ENCODE measurements at regions of chr3 and their contacts with region 1.

Region 1: GRCh38 chr3:52339612-52340011 is 23.5 kb downstream of the DNAH1 start:
- DNase-seq: peak; percentile 64 to 82 (median 79)
- H3K4me3 ChIP-seq: no peak overlapping the region
- H3K4me3 Mint-ChIP-seq: no peak overlapping the region
- H3K27ac ChIP-seq: no peak overlapping the region
- H3K27ac Mint-ChIP-seq: peak overlapping the region in 6 of 7 donors; percentile 12 to 88 (median 52)
- H3K4me1 ChIP-seq: no peaks in the 10 kb centered on the region
- H3K4me1 Mint-ChIP-seq: peaks cover 7 to 10% (median 8%) of the 10 kb centered on the region in 4 donors
- H3K27me3 ChIP-seq: no peaks in the 10 kb centered on the region
- H3K27me3 Mint-ChIP-seq: no peaks in the 10 kb centered on the region

Region 2: GRCh38 chr3:52144034-52144795 is 195.4 kb before region 1 on chr3:
- CTCF ChIA-PET with region 1: interaction called, 4 read pairs
- POLR2A ChIA-PET with region 1: no interaction called
- intact Hi-C with region 1: loop called (anchors 1 kb)
- DNase-seq: peak; percentile 80 to 91 (median 82)
- H3K4me3 ChIP-seq: no peak overlapping the region
- H3K4me3 Mint-ChIP-seq: no peak overlapping the region
- H3K27ac ChIP-seq: no peak overlapping the region
- H3K27ac Mint-ChIP-seq: peak overlapping the region in 6 of 7 donors; percentile 32 to 82 (median 60)
- H3K4me1 ChIP-seq: peaks cover 6% of the 10 kb centered on the region
- H3K4me1 Mint-ChIP-seq: peaks cover 6 to 11% (median 9%) of the 10 kb centered on the region in 4 donors
- H3K27me3 ChIP-seq: no peaks in the 10 kb centered on the region
- H3K27me3 Mint-ChIP-seq: no peaks in the 10 kb centered on the region

Region 3: DNA sequence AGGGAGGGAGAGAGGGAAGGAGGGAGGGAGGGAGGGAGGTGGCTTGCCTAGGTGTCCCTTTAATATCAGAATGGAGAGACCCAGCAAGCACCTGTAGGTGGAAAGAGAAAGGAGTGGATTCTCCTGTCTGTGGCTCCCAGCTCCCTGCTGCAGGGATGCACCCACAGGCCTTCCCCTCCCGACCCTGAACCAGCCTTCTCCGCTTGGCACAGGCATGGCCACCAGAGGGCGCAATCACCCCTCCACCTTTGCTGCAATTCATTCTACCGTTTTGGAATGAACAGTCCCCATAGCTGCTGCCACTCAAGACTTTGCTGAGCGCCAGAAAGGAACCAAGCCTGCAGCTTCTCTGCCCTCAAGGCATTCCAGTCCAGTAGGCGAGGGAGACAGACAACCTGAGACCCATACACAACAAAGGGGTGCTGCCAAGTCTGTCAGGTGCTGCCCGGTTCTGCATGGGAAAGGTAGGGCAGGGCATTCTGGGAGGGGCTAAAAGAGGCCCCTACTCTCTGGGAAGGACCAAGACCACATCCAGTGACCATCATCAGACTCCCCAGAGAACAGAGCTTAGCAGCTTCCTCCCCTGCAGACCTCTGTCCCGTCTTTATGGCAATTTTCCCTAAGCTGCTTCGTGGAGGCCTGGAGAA is 119.1 kb before region 1 on chr3:
- CTCF ChIA-PET with region 1: interaction called, 247 read pairs
- POLR2A ChIA-PET with region 1: interaction called, 10 read pairs
- intact Hi-C with region 1: loop called (anchors 1 kb)
- DNase-seq: peak; percentile 81 to 86 (median 83)
- H3K4me3 ChIP-seq: no peak overlapping the region
- H3K4me3 Mint-ChIP-seq: peak overlapping the region in 7 of 8 donors; percentile 52 to 85 (median 67)
- H3K27ac ChIP-seq: peak overlapping the region; percentile 44
- H3K27ac Mint-ChIP-seq: peak overlapping the region; percentile 61 to 93 (median 84)
- H3K4me1 ChIP-seq: peaks cover 98% of the 10 kb centered on the region
- H3K4me1 Mint-ChIP-seq: peaks cover 50 to 99% (median 80%) of the 10 kb centered on the region in 4 donors
- H3K27me3 ChIP-seq: no peaks in the 10 kb centered on the region
- H3K27me3 Mint-ChIP-seq: no peaks in the 10 kb centered on the region

Region 4: GRCh38 chr3:52245322-52246263 is 94.0 kb before region 1 on chr3 and contains the start of gene PPM1M:
- CTCF ChIA-PET with region 1: interaction called, 26 read pairs
- POLR2A ChIA-PET with region 1: interaction called, 3 read pairs
- intact Hi-C with region 1: no loop called
- DNase-seq: peak; percentile 71 to 84 (median 79)
- H3K4me3 ChIP-seq: peak within 1 kb of the TSS; percentile 88 to 95
- H3K4me3 Mint-ChIP-seq: peak within 1 kb of the TSS; percentile 82 to 94 (median 90)
- H3K27ac ChIP-seq: peak within 1 kb of the TSS; percentile 90
- H3K27ac Mint-ChIP-seq: peak within 1 kb of the TSS; percentile 95 to 97 (median 96)
- H3K4me1 ChIP-seq: peaks cover 85% of the 10 kb centered on the region
- H3K4me1 Mint-ChIP-seq: peaks cover 53 to 90% (median 72%) of the 10 kb centered on the region in 4 donors
- H3K27me3 ChIP-seq: no peaks in the 10 kb centered on the region
- H3K27me3 Mint-ChIP-seq: no peaks in the 10 kb centered on the region
- total RNA-seq, gene PPM1M: 70.2 to 81.1 TPM

Region 5: DNA sequence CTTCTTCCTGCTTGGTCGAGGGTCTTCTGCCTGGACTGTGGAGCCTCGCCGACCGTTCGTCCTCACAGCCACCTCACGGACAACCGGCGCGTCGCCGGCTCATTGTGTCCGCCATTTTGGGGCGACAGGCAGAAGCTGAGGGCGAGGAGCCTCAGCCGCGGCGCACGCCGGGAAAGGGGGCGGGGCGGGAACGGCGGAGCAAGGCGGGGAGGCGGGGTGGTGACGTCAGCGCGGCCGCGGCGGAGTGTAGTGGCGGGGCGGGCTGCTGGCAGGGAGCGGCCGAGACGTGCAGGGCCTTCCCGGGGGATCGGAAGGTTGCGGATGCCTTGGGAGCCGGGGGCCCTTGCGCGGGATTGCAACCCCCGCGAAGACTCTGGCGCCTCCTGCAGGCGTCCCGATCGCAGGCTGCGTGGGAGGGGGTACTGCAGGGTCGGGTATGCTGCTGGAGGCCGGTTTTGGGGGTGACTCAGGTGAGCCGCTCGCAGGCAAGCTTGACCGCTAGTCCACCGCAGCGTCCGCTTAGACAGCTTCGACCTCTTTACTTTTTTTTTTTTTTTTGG is 61.0 kb before region 1 on chr3 and contains the start of gene WDR82:
- CTCF ChIA-PET with region 1: interaction called, 16 read pairs
- POLR2A ChIA-PET with region 1: interaction called, 6 read pairs
- intact Hi-C with region 1: loop called (anchors 5 kb)
- DNase-seq: peak; percentile 94 to 97 (median 95)
- H3K4me3 ChIP-seq: peak within 1 kb of the TSS; percentile 58 to 71
- H3K4me3 Mint-ChIP-seq: peak within 1 kb of the TSS; percentile 92 to 99 (median 98)
- H3K27ac ChIP-seq: peak within 1 kb of the TSS; percentile 87
- H3K27ac Mint-ChIP-seq: peak within 1 kb of the TSS; percentile 96 to 100 (median 100)
- H3K4me1 ChIP-seq: peaks cover 76% of the 10 kb centered on the region
- H3K4me1 Mint-ChIP-seq: peaks cover 40 to 87% (median 56%) of the 10 kb centered on the region in 4 donors
- H3K27me3 ChIP-seq: no peaks in the 10 kb centered on the region
- H3K27me3 Mint-ChIP-seq: peaks cover 0 to 3% of the 10 kb centered on the region in 2 donors
- total RNA-seq, gene WDR82: 149 to 150 TPM